Heart left ventricle (tissue), 16 donors: ENCODE measurements at regions of chr3 and their contacts with region 1.

Region 1: DNA sequence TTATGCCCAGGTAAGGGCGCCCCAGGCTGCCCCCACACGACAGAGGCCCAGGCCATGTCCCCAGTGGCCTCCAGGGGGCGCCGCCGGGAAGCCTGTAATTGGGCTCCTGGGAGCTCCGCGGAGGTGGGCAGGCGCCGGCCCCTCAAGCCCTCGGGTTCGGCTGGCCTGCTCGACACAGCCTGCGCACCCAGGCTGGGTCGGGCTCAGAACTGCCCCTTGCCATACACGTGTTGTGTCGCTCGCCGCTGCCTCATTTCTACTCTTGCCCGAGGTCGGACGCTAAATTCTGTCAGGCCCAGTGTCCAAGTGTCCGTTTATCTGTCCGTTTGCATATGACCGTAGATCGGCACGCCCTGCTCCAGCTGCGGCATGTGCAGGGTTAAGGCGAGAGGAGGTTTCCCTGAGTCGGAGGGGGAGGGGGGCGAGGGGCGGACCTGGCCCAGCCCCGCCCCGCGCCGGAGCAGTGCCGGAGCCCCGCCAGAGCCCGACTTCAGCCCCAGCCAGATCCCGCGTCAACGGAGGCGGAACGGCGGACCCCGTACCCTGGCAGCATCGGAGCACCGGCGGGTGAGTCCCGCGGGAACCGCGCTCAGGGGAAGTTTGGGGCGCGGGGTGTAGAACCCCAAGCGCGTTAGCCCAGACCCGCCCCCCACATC is at the start of gene KLHDC8B:
- DNase-seq: peak; percentile 92 to 94 (median 93)
- ATAC-seq: peak; percentile 83 to 91 (median 88)
- H3K4me3 ChIP-seq: peak within 1 kb of the TSS; percentile 47 to 98 (median 92)
- H3K27ac ChIP-seq: peak within 1 kb of the TSS; percentile 79 to 99 (median 96)
- H3K4me1 ChIP-seq: peaks cover 13 to 62% (median 51%) of the 10 kb centered on the region in 12 donors
- H3K27me3 ChIP-seq: no peaks in the 10 kb centered on the region
- CTCF ChIP-seq: peak; percentile 95 to 98 (median 96)
- POLR2A ChIP-seq: peak in 1 of 2 donors; percentile 81
- total RNA-seq, gene KLHDC8B: 96.9 to 138 (median 112) TPM

Region 2: GRCh38 chr3:49076646-49077045 is 94.6 kb before region 1 on chr3:
- intact Hi-C with region 1: no loop called
- DNase-seq: no peak
- ATAC-seq: no peak
- H3K4me3 ChIP-seq: no peak overlapping the region
- H3K27ac ChIP-seq: no peak overlapping the region
- H3K4me1 ChIP-seq: peaks cover 0 to 9% (median 0%) of the 10 kb centered on the region in 12 donors
- H3K27me3 ChIP-seq: no peaks in the 10 kb centered on the region
- CTCF ChIP-seq: no peak
- POLR2A ChIP-seq: no peak

Region 3: DNA sequence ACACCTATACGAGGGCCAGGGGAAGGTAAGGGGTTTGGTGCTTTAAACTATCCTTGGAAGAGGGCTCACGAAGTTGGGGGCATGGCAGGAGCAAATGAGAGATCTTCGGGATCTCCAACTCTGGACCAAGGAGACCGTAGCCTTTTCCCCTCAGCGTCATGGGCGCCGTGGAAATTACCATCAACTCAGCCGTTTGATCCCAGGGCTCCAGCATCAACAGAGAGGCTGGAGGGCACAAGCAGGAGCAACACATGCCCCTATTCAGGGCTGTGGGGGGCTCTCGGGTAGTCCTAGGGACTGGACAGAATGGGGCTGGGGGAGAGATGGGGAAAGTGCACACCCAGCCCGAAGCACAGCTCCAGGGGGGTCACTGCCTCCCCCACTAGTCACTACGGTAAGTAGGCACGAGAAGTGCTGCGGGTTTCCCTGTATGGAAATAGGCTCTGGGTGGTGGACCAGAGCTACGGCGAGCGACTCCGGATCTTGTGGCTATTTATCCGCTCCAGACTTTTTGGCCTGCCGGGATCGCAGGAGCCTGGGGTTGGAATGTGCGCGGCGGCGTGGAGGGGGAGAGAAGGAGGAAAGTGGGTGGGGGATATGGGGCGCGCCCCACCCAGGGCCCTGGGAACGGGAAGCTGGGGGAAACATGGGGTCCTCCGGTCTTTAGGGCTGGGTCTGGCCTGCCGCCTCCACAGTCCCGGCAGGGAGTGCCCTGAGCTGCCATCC is 37.9 kb before region 1 on chr3:
- intact Hi-C with region 1: loop called in 3 of 10 experiments (anchors 5 kb)
- DNase-seq: peak; percentile 87 to 92 (median 91)
- ATAC-seq: peak; percentile 79 to 91 (median 83)
- H3K4me3 ChIP-seq: peak overlapping the region; percentile 62 to 90 (median 80)
- H3K27ac ChIP-seq: peak overlapping the region; percentile 87 to 99 (median 94)
- H3K4me1 ChIP-seq: peaks cover 8 to 48% (median 30%) of the 10 kb centered on the region in 12 donors
- H3K27me3 ChIP-seq: no peaks in the 10 kb centered on the region
- CTCF ChIP-seq: no peak
- POLR2A ChIP-seq: peak in 1 of 2 donors; percentile 26

Region 4: GRCh38 chr3:49217688-49218470 is 46.6 kb after region 1 on chr3:
- intact Hi-C with region 1: loop called in 2 of 10 experiments (anchors 1 to 2 kb)
- DNase-seq: peak in 4 of 5 donors; percentile 22 to 68 (median 49)
- ATAC-seq: peak; percentile 80 to 83 (median 81)
- H3K4me3 ChIP-seq: no peak overlapping the region
- H3K27ac ChIP-seq: peak overlapping the region; percentile 51 to 94 (median 84)
- H3K4me1 ChIP-seq: peaks cover 0 to 25% (median 16%) of the 10 kb centered on the region in 12 donors
- H3K27me3 ChIP-seq: no peaks in the 10 kb centered on the region
- CTCF ChIP-seq: no peak
- POLR2A ChIP-seq: no peak

Region 5: GRCh38 chr3:49276475-49277382 is 105.5 kb after region 1 on chr3 and contains the start of gene C3orf62:
- intact Hi-C with region 1: loop called (anchors 1 to 10 kb)
- DNase-seq: peak; percentile 95 to 96 (median 96)
- ATAC-seq: peak; percentile 85 to 97 (median 96)
- H3K4me3 ChIP-seq: peak within 1 kb of the TSS; percentile 25 to 64 (median 53)
- H3K27ac ChIP-seq: peak within 1 kb of the TSS; percentile 89 to 99 (median 96)
- H3K4me1 ChIP-seq: peaks cover 0 to 43% (median 31%) of the 10 kb centered on the region in 12 donors
- H3K27me3 ChIP-seq: no peaks in the 10 kb centered on the region
- CTCF ChIP-seq: no peak
- POLR2A ChIP-seq: peak in 1 of 2 donors; percentile 26
- total RNA-seq, gene C3orf62: 1.3 to 5.6 (median 2.9) TPM

Region 6: GRCh38 chr3:49295489-49296058 is 124.3 kb after region 1 on chr3:
- intact Hi-C with region 1: loop called in 6 of 10 experiments (anchors 5 kb)
- DNase-seq: no peak
- ATAC-seq: peak in 1 of 4 donors; percentile 12
- H3K4me3 ChIP-seq: no peak overlapping the region
- H3K27ac ChIP-seq: peak overlapping the region in 7 of 12 donors; percentile 75 to 85 (median 84)
- H3K4me1 ChIP-seq: peaks cover 7 to 24% (median 19%) of the 10 kb centered on the region in 12 donors
- H3K27me3 ChIP-seq: no peaks in the 10 kb centered on the region
- CTCF ChIP-seq: peak; percentile 35 to 63 (median 51)
- POLR2A ChIP-seq: no peak

Region 7: DNA sequence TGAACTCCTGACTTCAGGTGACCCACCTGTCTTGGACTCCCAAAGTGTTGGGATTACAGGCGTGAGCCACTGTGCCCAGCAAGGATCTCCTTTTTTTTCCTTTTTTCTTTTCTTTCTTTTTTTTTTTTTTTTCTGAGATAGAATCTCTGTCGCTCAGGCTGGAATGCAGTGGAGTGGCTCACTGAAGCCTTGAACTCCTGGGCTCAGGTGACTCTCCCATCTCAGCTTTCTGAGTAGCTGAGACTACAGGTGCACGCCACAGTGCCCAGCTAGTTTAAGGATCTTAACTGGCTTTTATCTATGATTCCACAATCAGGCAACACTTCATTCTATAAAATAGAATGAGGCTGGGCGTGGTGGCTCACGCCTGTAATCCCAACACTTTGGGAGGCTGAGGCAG is 274.1 kb after region 1 on chr3:
- intact Hi-C with region 1: loop called in 8 of 10 experiments (anchors 2 to 10 kb)
- DNase-seq: no peak
- ATAC-seq: no peak
- H3K4me3 ChIP-seq: no peak overlapping the region
- H3K27ac ChIP-seq: peak overlapping the region in 1 of 12 donors; percentile 82
- H3K4me1 ChIP-seq: peaks cover 0 to 34% (median 6%) of the 10 kb centered on the region in 12 donors
- H3K27me3 ChIP-seq: no peaks in the 10 kb centered on the region
- CTCF ChIP-seq: no peak
- POLR2A ChIP-seq: no peak

Region 8: DNA sequence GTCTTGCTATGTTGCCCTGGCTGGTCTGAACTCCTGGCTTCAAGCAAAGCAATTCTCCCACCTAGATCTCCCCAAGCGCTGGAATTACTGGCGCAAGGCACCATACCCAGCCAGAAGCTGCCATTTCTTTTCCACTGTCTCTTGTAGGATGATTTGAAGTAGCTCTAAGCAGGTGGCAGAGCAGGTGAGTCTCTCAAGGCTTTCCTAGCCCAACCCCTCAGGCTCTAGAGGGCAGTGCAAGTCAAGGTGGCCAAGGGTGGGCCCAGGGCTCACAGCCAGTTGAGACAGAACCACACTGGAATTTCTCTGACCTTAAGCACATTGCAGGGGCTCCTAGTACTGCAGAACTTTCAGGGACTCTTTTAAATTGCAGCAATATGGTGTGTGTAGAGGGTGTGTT is 283.2 kb after region 1 on chr3:
- intact Hi-C with region 1: loop called in 8 of 10 experiments (anchors 2 to 10 kb)
- DNase-seq: peak in 4 of 5 donors; percentile 18 to 55 (median 42)
- ATAC-seq: peak; percentile 53 to 81 (median 68)
- H3K4me3 ChIP-seq: no peak overlapping the region
- H3K27ac ChIP-seq: peak overlapping the region in 7 of 12 donors; percentile 6 to 74 (median 59)
- H3K4me1 ChIP-seq: peaks cover 0 to 28% (median 14%) of the 10 kb centered on the region in 12 donors
- H3K27me3 ChIP-seq: no peaks in the 10 kb centered on the region
- CTCF ChIP-seq: peak in 11 of 12 donors; percentile 8 to 54 (median 36)
- POLR2A ChIP-seq: no peak

Region 9: GRCh38 chr3:49616491-49616941 is 445.3 kb after region 1 on chr3:
- intact Hi-C with region 1: no loop called
- DNase-seq: no peak
- ATAC-seq: no peak
- H3K4me3 ChIP-seq: no peak overlapping the region
- H3K27ac ChIP-seq: no peak overlapping the region
- H3K4me1 ChIP-seq: no peaks in the 10 kb centered on the region
- H3K27me3 ChIP-seq: no peaks in the 10 kb centered on the region
- CTCF ChIP-seq: no peak
- POLR2A ChIP-seq: no peak